Endothelial cell of umbilical vein (primary cell): ENCODE measurements at regions of chr7 and their contacts with region 1.

Region 1: GRCh38 chr7:139777948-139778841 is at the start of gene HIPK2:
- DNase-seq: peak; percentile 51
- H3K4me3 ChIP-seq: peak within 1 kb of the TSS; percentile 70 to 99 (median 96)
- H3K27ac ChIP-seq: peak within 1 kb of the TSS; percentile 74
- H3K4me1 ChIP-seq: peaks cover 23% of the 10 kb centered on the region
- H3K27me3 ChIP-seq: no peaks in the 10 kb centered on the region
- CTCF ChIP-seq: no peak
- POLR2A ChIP-seq: no peak
- total RNA-seq, gene HIPK2: 40.3 and 43.8 TPM in 2 replicates

Region 2: GRCh38 chr7:139505563-139505962 is 272.6 kb before region 1 on chr7:
- CTCF ChIA-PET with region 1: no interaction called
- POLR2A ChIA-PET with region 1: no interaction called
- dilution Hi-C with region 1: no loop called
- intact Hi-C with region 1: loop called (anchors 5 kb)
- DNase-seq: no peak
- H3K4me3 ChIP-seq: no peak overlapping the region
- H3K27ac ChIP-seq: no peak overlapping the region
- H3K4me1 ChIP-seq: no peaks in the 10 kb centered on the region
- H3K27me3 ChIP-seq: no peaks in the 10 kb centered on the region
- CTCF ChIP-seq: peak; percentile 8 to 28
- POLR2A ChIP-seq: no peak

Region 3: DNA sequence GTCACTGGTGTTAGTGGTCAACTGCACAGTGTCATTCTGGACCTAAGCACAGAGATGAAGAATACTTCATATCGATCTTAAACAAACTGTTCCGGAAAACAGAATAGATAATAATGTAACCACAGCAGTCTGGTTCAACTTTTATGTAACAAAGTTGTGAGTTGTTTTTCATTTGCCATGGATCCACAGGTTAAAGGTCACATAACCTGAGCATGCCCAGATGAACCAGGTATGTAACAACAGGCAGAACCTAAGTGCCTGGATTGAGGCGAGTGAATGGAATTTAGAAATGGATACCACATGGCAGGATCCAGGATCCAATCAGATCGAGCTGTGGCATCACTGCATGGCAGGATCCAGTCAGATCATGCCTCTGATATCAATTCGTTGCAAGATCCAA is 167.6 kb before region 1 on chr7:
- CTCF ChIA-PET with region 1: no interaction called
- POLR2A ChIA-PET with region 1: no interaction called
- dilution Hi-C with region 1: no loop called
- intact Hi-C with region 1: no loop called
- DNase-seq: no peak
- H3K4me3 ChIP-seq: no peak overlapping the region
- H3K27ac ChIP-seq: no peak overlapping the region
- H3K4me1 ChIP-seq: no peaks in the 10 kb centered on the region
- H3K27me3 ChIP-seq: no peaks in the 10 kb centered on the region
- CTCF ChIP-seq: no peak
- POLR2A ChIP-seq: no peak

Region 4: GRCh38 chr7:139680676-139681462 is 97.3 kb before region 1 on chr7:
- CTCF ChIA-PET with region 1: no interaction called
- POLR2A ChIA-PET with region 1: no interaction called
- dilution Hi-C with region 1: no loop called
- intact Hi-C with region 1: loop called (anchors 1 kb)
- DNase-seq: peak; percentile 91
- H3K4me3 ChIP-seq: no peak overlapping the region
- H3K27ac ChIP-seq: peak overlapping the region; percentile 92
- H3K4me1 ChIP-seq: peaks cover 46% of the 10 kb centered on the region
- H3K27me3 ChIP-seq: no peaks in the 10 kb centered on the region
- CTCF ChIP-seq: no peak
- POLR2A ChIP-seq: peak; percentile 70

Region 5: DNA sequence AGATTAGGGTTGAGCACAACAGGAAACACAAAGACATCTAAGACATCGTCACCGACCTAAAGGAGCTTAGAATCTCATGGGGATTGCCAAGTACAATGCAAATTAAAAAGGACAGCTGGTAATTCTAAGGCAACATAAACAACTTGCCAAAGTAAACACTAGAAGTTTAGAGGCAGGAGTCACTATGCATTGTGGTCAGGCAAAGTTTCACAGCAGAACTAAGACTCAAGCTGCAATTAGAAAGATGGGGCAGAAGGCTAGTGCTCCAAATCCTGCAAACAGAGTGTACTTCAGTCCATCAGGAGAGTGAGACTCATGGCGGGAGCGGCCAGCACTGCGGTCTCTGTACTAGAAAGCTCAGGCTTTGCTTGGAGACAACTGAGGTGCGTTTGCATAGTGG is 53.1 kb before region 1 on chr7:
- CTCF ChIA-PET with region 1: no interaction called
- POLR2A ChIA-PET with region 1: no interaction called
- dilution Hi-C with region 1: no loop called
- intact Hi-C with region 1: loop called (anchors 1 kb)
- DNase-seq: peak; percentile 33
- H3K4me3 ChIP-seq: no peak overlapping the region
- H3K27ac ChIP-seq: no peak overlapping the region
- H3K4me1 ChIP-seq: peaks cover 41% of the 10 kb centered on the region
- H3K27me3 ChIP-seq: no peaks in the 10 kb centered on the region
- CTCF ChIP-seq: no peak
- POLR2A ChIP-seq: no peak

Region 6: DNA sequence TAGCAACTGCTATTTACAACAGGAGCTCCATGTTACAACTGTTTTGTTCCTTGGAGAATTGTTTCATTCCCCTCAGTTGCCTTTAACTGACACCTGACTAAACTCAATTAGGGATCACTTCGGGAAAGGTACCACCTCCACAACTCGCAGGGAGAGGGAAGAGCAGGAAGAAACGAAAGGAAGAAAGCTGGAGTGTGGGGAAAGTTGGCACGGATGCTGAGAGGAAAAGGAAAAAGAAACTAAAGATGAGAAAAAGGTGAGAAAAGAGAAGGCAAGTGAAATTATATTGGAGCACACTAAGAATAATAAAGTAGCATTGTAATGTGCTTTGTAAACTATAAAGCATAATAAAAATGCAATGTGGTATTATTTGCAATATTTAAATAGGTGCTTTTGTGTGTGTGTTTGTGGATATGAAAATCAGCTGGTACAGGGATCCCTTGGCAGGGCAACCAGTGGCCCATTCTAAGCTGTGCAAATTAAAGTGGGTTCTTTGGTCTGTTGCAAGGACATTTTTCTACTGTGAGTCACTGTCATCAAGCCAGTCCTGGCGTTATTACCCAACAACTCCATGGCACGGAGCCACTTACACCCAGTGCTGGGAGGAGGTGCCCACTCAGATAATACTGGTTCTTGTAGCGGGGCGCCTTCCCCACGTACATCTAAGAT is 46.3 kb before region 1 on chr7:
- CTCF ChIA-PET with region 1: interaction called, 6 read pairs
- POLR2A ChIA-PET with region 1: no interaction called
- dilution Hi-C with region 1: no loop called
- intact Hi-C with region 1: loop called (anchors 2 kb)
- DNase-seq: peak; percentile 81
- H3K4me3 ChIP-seq: peak overlapping the region in 1 of 3 experiments; percentile 50
- H3K27ac ChIP-seq: peak overlapping the region; percentile 87
- H3K4me1 ChIP-seq: peaks cover 53% of the 10 kb centered on the region
- H3K27me3 ChIP-seq: no peaks in the 10 kb centered on the region
- CTCF ChIP-seq: no peak
- POLR2A ChIP-seq: no peak

Region 7: GRCh38 chr7:139871267-139871721 is 93.1 kb after region 1 on chr7:
- CTCF ChIA-PET with region 1: interaction called, 3 read pairs
- POLR2A ChIA-PET with region 1: no interaction called
- dilution Hi-C with region 1: no loop called
- intact Hi-C with region 1: loop called (anchors 5 kb)
- DNase-seq: peak; percentile 83
- H3K4me3 ChIP-seq: no peak overlapping the region
- H3K27ac ChIP-seq: no peak overlapping the region
- H3K4me1 ChIP-seq: peaks cover 14% of the 10 kb centered on the region
- H3K27me3 ChIP-seq: no peaks in the 10 kb centered on the region
- CTCF ChIP-seq: no peak
- POLR2A ChIP-seq: no peak

Region 8: GRCh38 chr7:139915864-139916716 is 137.9 kb after region 1 on chr7:
- CTCF ChIA-PET with region 1: interaction called, 3 read pairs
- POLR2A ChIA-PET with region 1: no interaction called
- dilution Hi-C with region 1: no loop called
- intact Hi-C with region 1: loop called (anchors 1 kb)
- DNase-seq: peak; percentile 88
- H3K4me3 ChIP-seq: no peak overlapping the region
- H3K27ac ChIP-seq: peak overlapping the region; percentile 72
- H3K4me1 ChIP-seq: peaks cover 30% of the 10 kb centered on the region
- H3K27me3 ChIP-seq: peaks cover 0 to 2% of the 10 kb centered on the region in 2 experiments
- CTCF ChIP-seq: no peak
- POLR2A ChIP-seq: no peak

Region 9: DNA sequence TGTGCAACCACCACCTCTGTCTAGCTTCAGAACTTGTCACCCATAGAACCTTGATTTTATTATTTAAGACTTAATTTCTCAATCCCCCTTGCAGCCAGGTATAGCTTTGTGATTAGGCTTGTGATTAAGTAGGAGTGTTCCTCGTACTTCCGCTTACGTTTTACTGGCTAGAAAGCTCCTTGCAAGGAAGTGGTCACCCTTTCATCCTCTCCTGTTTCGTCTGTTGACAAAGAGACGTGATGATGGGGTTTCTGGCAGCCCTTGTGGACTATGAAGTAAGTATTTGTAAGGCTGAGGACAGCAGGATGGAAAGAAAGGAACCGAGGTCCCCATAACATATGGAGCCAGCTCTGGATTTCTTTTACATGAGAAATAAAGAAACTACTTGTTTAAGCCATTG is 485.1 kb after region 1 on chr7:
- CTCF ChIA-PET with region 1: no interaction called
- POLR2A ChIA-PET with region 1: no interaction called
- dilution Hi-C with region 1: no loop called
- intact Hi-C with region 1: no loop called
- DNase-seq: no peak
- H3K4me3 ChIP-seq: no peak overlapping the region
- H3K27ac ChIP-seq: no peak overlapping the region
- H3K4me1 ChIP-seq: no peaks in the 10 kb centered on the region
- H3K27me3 ChIP-seq: no peaks in the 10 kb centered on the region
- CTCF ChIP-seq: no peak
- POLR2A ChIP-seq: no peak

Region 10: GRCh38 chr7:140384894-140385545 is 606.8 kb after region 1 on chr7:
- CTCF ChIA-PET with region 1: no interaction called
- POLR2A ChIA-PET with region 1: no interaction called
- dilution Hi-C with region 1: no loop called
- intact Hi-C with region 1: no loop called
- DNase-seq: peak; percentile 32
- H3K4me3 ChIP-seq: no peak overlapping the region
- H3K27ac ChIP-seq: no peak overlapping the region
- H3K4me1 ChIP-seq: peaks cover 9% of the 10 kb centered on the region
- H3K27me3 ChIP-seq: no peaks in the 10 kb centered on the region
- CTCF ChIP-seq: no peak
- POLR2A ChIP-seq: no peak